ENCODE measurements at regions of chr11 and their contacts with region 1.

Region 1: GRCh38 chr11:69918938-69919650 is 99.9 kb upstream of the FGF3 start:
- DNase-seq: no peak
- H3K4me3 ChIP-seq: no peak overlapping the region
- H3K27ac ChIP-seq: no peak overlapping the region
- H3K27me3 ChIP-seq: peaks cover 11% of the 10 kb centered on the region
- CTCF ChIP-seq: peak; percentile 93

Region 2: DNA sequence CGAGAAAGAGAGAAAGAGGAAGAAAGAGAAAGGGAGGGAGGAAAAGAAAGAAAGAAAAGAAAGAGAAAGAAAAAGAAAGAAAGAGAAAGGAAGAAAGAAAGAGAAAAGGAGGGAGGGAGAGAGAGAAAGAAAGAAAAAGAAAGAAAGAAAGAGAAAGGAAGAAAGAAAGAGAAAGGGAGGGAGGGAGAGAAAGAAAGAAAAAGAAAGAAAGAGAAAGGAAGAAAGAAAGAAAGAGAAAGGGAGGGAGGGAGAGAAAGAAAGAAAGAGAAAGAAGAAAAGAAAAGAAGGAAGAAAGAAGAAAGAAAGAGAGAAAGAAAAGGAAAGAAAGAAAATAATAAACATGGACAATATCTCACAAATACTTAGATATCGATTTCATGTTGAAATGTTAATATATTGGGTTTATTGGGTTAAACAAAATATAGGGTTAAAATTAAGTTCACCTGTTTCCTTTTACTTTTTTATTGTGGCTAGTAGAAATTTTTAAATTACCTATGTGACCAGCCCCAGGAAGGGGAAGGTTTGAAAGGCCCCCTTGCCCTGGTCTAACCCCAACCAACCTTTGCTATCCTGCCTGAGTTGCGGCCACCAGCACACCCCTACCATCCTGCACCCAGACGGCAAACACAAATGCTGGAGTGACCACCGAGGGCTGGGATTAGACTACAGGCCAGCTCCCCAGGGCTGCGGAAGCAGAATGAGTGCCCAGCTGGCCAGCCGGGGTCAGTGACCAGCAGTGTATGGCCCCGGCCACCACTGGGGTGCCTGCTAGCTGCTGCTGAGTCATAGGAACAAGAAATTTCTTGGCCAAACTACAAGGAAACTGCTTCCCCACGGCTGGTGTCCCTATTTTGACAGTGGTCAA is 18.9 kb before region 1 on chr11:
- CTCF ChIA-PET with region 1: interaction called, 13 read pairs
- POLR2A ChIA-PET with region 1: no interaction called
- DNase-seq: no peak
- H3K4me3 ChIP-seq: no peak overlapping the region
- H3K27ac ChIP-seq: no peak overlapping the region
- H3K27me3 ChIP-seq: peaks cover 14% of the 10 kb centered on the region
- CTCF ChIP-seq: no peak

Region 3: GRCh38 chr11:69930081-69931059 is 11.3 kb after region 1 on chr11:
- CTCF ChIA-PET with region 1: interaction called, 15 read pairs
- POLR2A ChIA-PET with region 1: no interaction called
- DNase-seq: no peak
- H3K4me3 ChIP-seq: no peak overlapping the region
- H3K27ac ChIP-seq: no peak overlapping the region
- H3K27me3 ChIP-seq: peaks cover 35% of the 10 kb centered on the region
- CTCF ChIP-seq: no peak

Region 4: GRCh38 chr11:69972351-69972802 is 53.3 kb after region 1 on chr11:
- CTCF ChIA-PET with region 1: no interaction called
- POLR2A ChIA-PET with region 1: no interaction called
- DNase-seq: no peak
- H3K4me3 ChIP-seq: no peak overlapping the region
- H3K27ac ChIP-seq: no peak overlapping the region
- H3K27me3 ChIP-seq: peaks cover 10% of the 10 kb centered on the region
- CTCF ChIP-seq: no peak

Region 5: GRCh38 chr11:70005107-70005818 is 86.2 kb after region 1 on chr11:
- CTCF ChIA-PET with region 1: no interaction called
- POLR2A ChIA-PET with region 1: no interaction called
- DNase-seq: peak; percentile 89
- H3K4me3 ChIP-seq: no peak overlapping the region
- H3K27ac ChIP-seq: peak overlapping the region; percentile 91
- H3K27me3 ChIP-seq: no peaks in the 10 kb centered on the region
- CTCF ChIP-seq: no peak

Region 6: GRCh38 chr11:70191495-70192140 is 272.5 kb after region 1 on chr11:
- CTCF ChIA-PET with region 1: interaction called, 43 read pairs
- POLR2A ChIA-PET with region 1: no interaction called
- DNase-seq: no peak
- H3K4me3 ChIP-seq: no peak overlapping the region
- H3K27ac ChIP-seq: no peak overlapping the region
- H3K27me3 ChIP-seq: peaks cover 8% of the 10 kb centered on the region
- CTCF ChIP-seq: peak; percentile 91

Region 7: GRCh38 chr11:70203749-70204465 is 284.8 kb after region 1 on chr11:
- CTCF ChIA-PET with region 1: interaction called, 43 read pairs
- POLR2A ChIA-PET with region 1: interaction called, 5 read pairs
- DNase-seq: peak; percentile 46
- H3K4me3 ChIP-seq: peak overlapping the region; percentile 95
- H3K27ac ChIP-seq: peak overlapping the region; percentile 91
- H3K27me3 ChIP-seq: no peaks in the 10 kb centered on the region
- CTCF ChIP-seq: no peak

Measured in AG04450 (cell line).